ENCODE measurements at regions of chr21 and their contacts with region 1.

Region 1: DNA sequence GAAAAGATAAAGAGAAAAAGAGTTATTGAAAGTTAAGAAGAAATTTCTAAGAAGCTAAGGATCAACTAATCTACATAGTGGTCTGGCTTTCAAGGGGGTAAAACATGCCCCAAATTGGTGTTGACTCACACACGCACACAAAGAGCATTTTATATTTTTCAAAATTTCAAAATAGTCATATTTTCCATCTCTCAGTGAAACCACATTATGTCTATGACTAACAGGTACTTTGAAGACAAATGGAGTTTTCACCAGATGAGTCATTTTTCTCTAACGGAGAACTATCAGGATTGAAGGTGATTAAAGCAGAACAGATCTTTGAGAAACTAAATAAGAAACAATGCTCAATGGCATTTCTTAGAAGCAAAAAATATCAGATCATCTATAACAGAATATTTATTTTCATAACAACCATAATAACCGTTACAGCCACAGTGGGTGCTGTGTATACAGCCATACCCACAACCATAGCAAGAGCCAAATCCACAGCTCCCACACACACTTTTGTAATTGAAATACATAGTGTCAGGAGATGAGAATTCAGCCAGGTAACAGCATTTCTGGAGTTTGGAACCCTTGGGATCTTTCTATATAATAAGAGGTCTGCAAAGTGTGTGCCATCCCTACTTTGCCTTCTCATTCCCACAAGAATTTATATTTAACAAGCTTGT is at the start of gene KRTAP21-3:
- DNase-seq: peak; percentile 33
- H3K4me3 Mint-ChIP-seq: no peak within 1 kb of the TSS
- H3K27ac Mint-ChIP-seq: peak within 1 kb of the TSS; percentile 46
- H3K4me1 Mint-ChIP-seq: peaks cover 21% of the 10 kb centered on the region
- H3K27me3 Mint-ChIP-seq: peaks cover 2% of the 10 kb centered on the region
- total RNA-seq, gene KRTAP21-3: not detected

Region 2: DNA sequence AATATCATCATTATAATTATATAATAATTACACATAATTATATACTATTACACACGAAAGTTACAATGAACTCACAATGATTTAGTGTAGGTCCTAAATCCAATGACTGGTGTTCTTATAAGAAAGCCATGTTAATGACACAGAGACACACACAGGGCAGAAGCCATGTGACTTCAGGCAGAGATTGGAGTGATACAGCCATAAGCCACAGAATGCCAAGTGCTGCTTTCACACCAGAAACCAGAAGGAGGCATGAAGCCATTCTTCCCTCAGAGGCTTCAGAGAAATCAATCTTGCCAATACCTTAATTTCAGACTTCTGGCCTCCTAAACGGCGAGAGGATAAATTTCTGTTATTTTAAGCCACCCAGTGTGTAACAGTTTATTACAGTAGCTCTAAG is 467.3 kb after region 1 on chr21:
- CTCF ChIA-PET with region 1: no interaction called
- intact Hi-C with region 1: loop called (anchors 5 kb)
- DNase-seq: peak; percentile 43
- H3K4me3 Mint-ChIP-seq: peak overlapping the region; percentile 70
- H3K27ac Mint-ChIP-seq: peak overlapping the region; percentile 98
- H3K4me1 Mint-ChIP-seq: peaks cover 76% of the 10 kb centered on the region
- H3K27me3 Mint-ChIP-seq: no peaks in the 10 kb centered on the region

Region 3: GRCh38 chr21:31293986-31294385 is 575.6 kb after region 1 on chr21:
- CTCF ChIA-PET with region 1: no interaction called
- intact Hi-C with region 1: loop called (anchors 10 kb)
- DNase-seq: peak; percentile 88
- H3K4me3 Mint-ChIP-seq: no peak overlapping the region
- H3K27ac Mint-ChIP-seq: peak overlapping the region; percentile 84
- H3K4me1 Mint-ChIP-seq: peaks cover 44% of the 10 kb centered on the region
- H3K27me3 Mint-ChIP-seq: no peaks in the 10 kb centered on the region

Region 4: GRCh38 chr21:31659536-31660258 is 941.3 kb after region 1 on chr21 and contains the start of gene SOD1:
- CTCF ChIA-PET with region 1: no interaction called
- intact Hi-C with region 1: loop called (anchors 10 kb)
- DNase-seq: peak; percentile 95
- H3K4me3 Mint-ChIP-seq: peak within 1 kb of the TSS; percentile 100
- H3K27ac Mint-ChIP-seq: peak within 1 kb of the TSS; percentile 99
- H3K4me1 Mint-ChIP-seq: peaks cover 68% of the 10 kb centered on the region
- H3K27me3 Mint-ChIP-seq: no peaks in the 10 kb centered on the region
- total RNA-seq, gene SOD1: 281 to 297 TPM